ENCODE measurements at regions of chr12 and their contacts with region 1.

Region 1: GRCh38 chr12:123131879-123132452 is 18.9 kb downstream of the PITPNM2 start:
- DNase-seq: no peak
- ATAC-seq: peak; percentile 84
- H3K4me3 Mint-ChIP-seq: peak overlapping the region; percentile 11
- H3K27ac Mint-ChIP-seq: peak overlapping the region; percentile 68
- H3K4me1 Mint-ChIP-seq: peaks cover 50% of the 10 kb centered on the region
- H3K27me3 Mint-ChIP-seq: no peaks in the 10 kb centered on the region
- CTCF ChIP-seq: no peak

Region 2: DNA sequence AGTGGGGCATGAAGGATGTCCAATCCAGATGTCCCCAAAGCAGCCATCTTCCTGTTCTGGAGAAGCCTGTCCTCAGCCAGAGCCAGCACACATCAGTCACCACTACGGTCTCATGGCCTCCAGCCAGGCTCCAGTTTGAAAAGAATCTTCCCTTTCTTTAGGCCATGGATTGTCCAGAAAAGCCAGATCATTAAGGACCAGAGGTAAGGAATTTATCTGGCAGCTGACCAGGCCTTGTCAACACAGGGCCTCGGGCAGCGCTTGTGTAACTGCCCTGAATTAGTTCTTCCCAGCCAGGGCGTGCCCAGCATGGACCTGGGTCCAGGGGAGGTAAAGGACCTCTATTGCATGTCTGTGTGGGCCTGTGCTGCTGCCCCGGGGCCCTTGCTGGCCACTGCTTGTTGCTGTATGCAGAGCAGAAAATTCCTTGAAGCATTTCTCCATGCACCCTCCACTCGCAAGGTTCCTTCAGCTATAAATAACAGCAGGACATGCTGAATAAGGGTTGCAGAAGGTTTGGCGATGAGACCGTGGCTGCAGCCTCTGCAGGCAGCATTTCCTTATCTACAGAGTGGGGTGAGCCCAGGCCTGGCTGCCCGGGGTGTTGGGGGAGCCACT is 214.4 kb before region 1 on chr12:
- CTCF ChIA-PET with region 1: no interaction called
- POLR2A ChIA-PET with region 1: interaction called, 13 read pairs
- intact Hi-C with region 1: no loop called
- DNase-seq: no peak
- ATAC-seq: no peak
- H3K4me3 Mint-ChIP-seq: no peak overlapping the region
- H3K27ac Mint-ChIP-seq: no peak overlapping the region
- H3K4me1 Mint-ChIP-seq: peaks cover 10% of the 10 kb centered on the region
- H3K27me3 Mint-ChIP-seq: no peaks in the 10 kb centered on the region
- CTCF ChIP-seq: no peak

Region 3: DNA sequence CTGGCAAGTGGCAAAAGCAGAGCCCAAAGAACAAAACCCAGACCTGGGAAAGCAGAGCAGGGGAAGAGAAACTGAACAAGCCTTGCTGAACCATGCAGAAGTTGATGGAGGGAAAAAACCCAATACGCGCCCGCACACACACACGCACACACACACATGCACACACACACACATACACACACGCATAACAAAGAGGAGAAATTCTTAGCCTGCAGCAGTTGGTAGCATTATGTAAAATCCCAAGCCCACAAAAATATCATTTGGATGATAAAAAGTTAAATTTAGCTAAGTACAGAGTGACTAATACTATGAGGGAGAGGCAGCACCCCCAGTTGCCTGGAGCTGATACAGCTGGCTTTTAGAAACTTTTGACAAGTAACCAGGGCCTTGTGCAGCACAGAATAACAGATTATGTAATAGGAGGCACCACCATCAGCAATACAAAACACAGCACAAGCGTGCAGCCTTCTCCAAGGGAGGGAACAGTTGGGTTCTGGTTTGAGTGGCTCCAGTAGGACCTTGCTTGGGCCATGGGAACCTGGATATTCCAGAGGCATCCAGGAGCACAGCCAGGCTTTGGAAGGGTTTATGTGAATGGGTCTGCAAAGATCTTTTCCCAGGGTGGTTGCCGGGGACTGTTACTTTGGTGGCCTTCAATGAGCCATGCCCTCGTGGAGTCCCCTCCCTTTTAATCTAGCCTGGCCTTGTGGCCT is 16.4 kb before region 1 on chr12:
- CTCF ChIA-PET with region 1: no interaction called
- POLR2A ChIA-PET with region 1: interaction called, 16 read pairs
- intact Hi-C with region 1: loop called (anchors 1 kb)
- DNase-seq: peak; percentile 32
- ATAC-seq: peak; percentile 70
- H3K4me3 Mint-ChIP-seq: peak overlapping the region; percentile 29
- H3K27ac Mint-ChIP-seq: peak overlapping the region; percentile 75
- H3K4me1 Mint-ChIP-seq: peaks cover 81% of the 10 kb centered on the region
- H3K27me3 Mint-ChIP-seq: no peaks in the 10 kb centered on the region
- CTCF ChIP-seq: no peak

Region 4: DNA sequence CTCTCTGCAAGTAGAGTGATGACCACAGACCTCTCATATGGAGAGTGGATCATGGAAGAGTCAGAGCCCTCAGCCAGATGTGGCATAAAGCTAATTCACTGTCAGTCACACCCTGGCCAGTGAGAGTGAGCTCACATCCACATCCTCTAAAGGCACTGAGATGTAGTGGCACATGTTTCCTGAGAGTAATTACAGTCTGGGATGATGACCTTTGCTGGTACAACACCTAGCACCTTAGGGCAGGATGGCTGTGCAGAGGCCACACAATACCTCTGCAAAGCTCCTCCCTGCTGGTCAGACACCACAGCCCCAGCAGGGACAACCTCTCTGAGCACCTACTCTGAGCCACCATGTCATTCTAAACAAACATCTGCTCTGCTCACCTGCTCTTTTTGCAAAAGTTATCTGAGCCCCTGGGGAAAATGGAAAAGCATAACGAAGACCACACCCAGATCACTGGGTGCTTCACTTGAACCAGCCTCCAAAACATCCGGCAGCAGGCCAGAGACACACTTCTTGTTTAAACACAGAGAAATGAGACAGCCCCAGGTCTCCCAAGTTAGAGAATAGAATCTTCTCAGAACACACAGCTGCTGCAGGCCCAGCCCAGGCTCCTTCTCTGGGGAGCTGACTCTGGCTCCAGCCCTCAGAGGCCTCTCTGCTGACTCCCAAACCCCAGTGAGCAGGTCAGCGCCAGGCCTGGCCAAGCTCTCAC is 11.4 kb before region 1 on chr12:
- CTCF ChIA-PET with region 1: no interaction called
- POLR2A ChIA-PET with region 1: interaction called, 16 read pairs
- intact Hi-C with region 1: loop called (anchors 1 kb)
- DNase-seq: no peak
- ATAC-seq: peak; percentile 6
- H3K4me3 Mint-ChIP-seq: peak overlapping the region; percentile 61
- H3K27ac Mint-ChIP-seq: peak overlapping the region; percentile 82
- H3K4me1 Mint-ChIP-seq: peaks cover 64% of the 10 kb centered on the region
- H3K27me3 Mint-ChIP-seq: no peaks in the 10 kb centered on the region
- CTCF ChIP-seq: no peak

Region 5: DNA sequence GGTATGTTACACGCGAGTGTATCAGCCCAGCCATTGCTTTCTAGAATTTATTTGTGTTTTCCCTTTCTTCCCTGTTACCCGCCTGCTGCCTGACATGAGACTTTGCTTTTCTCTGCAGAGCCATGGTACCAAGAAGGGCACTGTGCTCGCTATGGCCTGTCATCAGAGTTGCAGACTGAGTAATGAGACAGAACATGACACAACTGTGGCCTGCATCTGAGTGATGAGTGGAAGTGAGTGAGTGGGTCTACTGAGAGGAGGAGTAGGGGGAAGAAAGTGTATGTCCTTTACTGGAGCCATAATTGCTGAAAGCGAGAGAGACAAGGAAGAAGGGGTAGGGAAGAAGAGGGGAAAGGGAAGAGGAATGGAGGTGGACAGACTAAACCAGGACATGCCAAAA is 398.7 kb after region 1 on chr12:
- CTCF ChIA-PET with region 1: no interaction called
- POLR2A ChIA-PET with region 1: no interaction called
- intact Hi-C with region 1: no loop called
- DNase-seq: no peak
- ATAC-seq: no peak
- H3K4me3 Mint-ChIP-seq: no peak overlapping the region
- H3K27ac Mint-ChIP-seq: no peak overlapping the region
- H3K4me1 Mint-ChIP-seq: peaks cover 18% of the 10 kb centered on the region
- H3K27me3 Mint-ChIP-seq: peaks cover 2% of the 10 kb centered on the region
- CTCF ChIP-seq: no peak